Left cardiac atrium (tissue), 4 donors: ENCODE measurements at regions of chr9 and their contacts with region 1.

Region 1: GRCh38 chr9:69877854-69878514 is 57.4 kb downstream of the CFAP95 start:
- DNase-seq: no peak
- ATAC-seq: peak; percentile 65 to 72

Region 2: GRCh38 chr9:69759421-69760277 is 118.3 kb before region 1 on chr9 and contains the start of gene PTAR1:
- intact Hi-C with region 1: loop called in 1 of 2 experiments (anchors 5 kb)
- DNase-seq: peak; percentile 94
- ATAC-seq: peak; percentile 98
- total RNA-seq, gene PTAR1: 31.1 to 34.5 TPM

Region 3: GRCh38 chr9:69818750-69819345 is 59.1 kb before region 1 on chr9:
- intact Hi-C with region 1: loop called in 1 of 2 experiments (anchors 10 kb)
- DNase-seq: no peak
- ATAC-seq: no peak